Activated CD4-positive, alpha-beta T cell treated with anti-CD3 and anti-CD28 coated beads, Interleukin-2, amount 10 ng/mL, durations not matched to agents 24 days and 14 days (primary cell): ENCODE measurements at regions of chr6 and their contacts with region 1.

Region 1: GRCh38 chr6:4135665-4136353 is 434 bp upstream of the ECI2 start:
- DNase-seq: peak; percentile 97
- H3K4me3 Mint-ChIP-seq: peak overlapping the region; percentile 85
- H3K27ac Mint-ChIP-seq: peak overlapping the region; percentile 84
- H3K4me1 Mint-ChIP-seq: peaks cover 28% of the 10 kb centered on the region
- H3K27me3 Mint-ChIP-seq: no peaks in the 10 kb centered on the region

Region 2: GRCh38 chr6:3157131-3157927 is 978.5 kb before region 1 on chr6 and contains the start of gene TUBB2A:
- intact Hi-C with region 1: loop called (anchors 5 kb)
- DNase-seq: peak; percentile 97
- H3K4me3 Mint-ChIP-seq: peak within 1 kb of the TSS; percentile 86
- H3K27ac Mint-ChIP-seq: peak within 1 kb of the TSS; percentile 76
- H3K4me1 Mint-ChIP-seq: peaks cover 22% of the 10 kb centered on the region
- H3K27me3 Mint-ChIP-seq: peaks cover 40% of the 10 kb centered on the region
- total RNA-seq, gene TUBB2A: 3.9 and 4.7 TPM in 2 replicates

Region 3: GRCh38 chr6:3848925-3849605 is 286.7 kb before region 1 on chr6 and contains the start of gene FAM50B:
- intact Hi-C with region 1: loop called (anchors 5 kb)
- DNase-seq: peak; percentile 97
- H3K4me3 Mint-ChIP-seq: peak within 1 kb of the TSS; percentile 75
- H3K27ac Mint-ChIP-seq: peak within 1 kb of the TSS; percentile 81
- H3K4me1 Mint-ChIP-seq: peaks cover 23% of the 10 kb centered on the region
- H3K27me3 Mint-ChIP-seq: peaks cover 4% of the 10 kb centered on the region
- total RNA-seq, gene FAM50B: 9.8 and 10.0 TPM in 2 replicates

Region 4: DNA sequence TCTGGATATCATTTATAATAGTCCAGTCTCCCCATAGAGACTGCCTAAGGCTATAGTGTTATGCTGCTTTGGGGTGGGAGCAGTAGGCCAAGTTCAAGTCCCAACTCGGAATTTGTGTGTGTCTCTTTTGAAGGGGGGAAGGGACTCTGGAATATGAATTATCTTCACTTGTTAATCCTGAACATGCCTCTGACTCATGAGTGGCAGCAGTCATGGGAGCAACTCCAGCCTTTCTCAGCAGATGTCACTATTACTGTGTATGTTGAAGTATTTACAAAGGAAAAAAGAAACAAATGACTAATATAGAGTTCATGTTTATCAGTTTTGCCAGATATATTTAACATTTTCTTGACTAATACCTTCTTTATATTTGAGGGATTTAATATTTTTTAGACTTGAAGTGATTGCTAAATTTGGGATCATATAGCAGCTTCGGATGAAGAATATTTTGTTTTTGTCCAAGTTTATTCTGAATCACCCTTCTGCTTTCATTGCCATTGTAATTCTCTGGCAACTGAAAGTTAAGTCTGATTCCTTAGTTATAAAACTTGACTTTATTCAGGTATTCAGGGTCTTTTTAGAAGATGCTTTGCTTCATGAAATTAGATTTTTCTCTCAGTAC is 80.3 kb before region 1 on chr6:
- intact Hi-C with region 1: loop called (anchors 1 kb)
- DNase-seq: peak; percentile 71
- H3K4me3 Mint-ChIP-seq: no peak overlapping the region
- H3K27ac Mint-ChIP-seq: no peak overlapping the region
- H3K4me1 Mint-ChIP-seq: peaks cover 23% of the 10 kb centered on the region
- H3K27me3 Mint-ChIP-seq: no peaks in the 10 kb centered on the region

Region 5: GRCh38 chr6:4155848-4156466 is 20.1 kb after region 1 on chr6:
- intact Hi-C with region 1: loop called (anchors 1 kb)
- DNase-seq: peak; percentile 94
- H3K4me3 Mint-ChIP-seq: no peak overlapping the region
- H3K27ac Mint-ChIP-seq: peak overlapping the region; percentile 56
- H3K4me1 Mint-ChIP-seq: peaks cover 4% of the 10 kb centered on the region
- H3K27me3 Mint-ChIP-seq: peaks cover 7% of the 10 kb centered on the region

Region 6: DNA sequence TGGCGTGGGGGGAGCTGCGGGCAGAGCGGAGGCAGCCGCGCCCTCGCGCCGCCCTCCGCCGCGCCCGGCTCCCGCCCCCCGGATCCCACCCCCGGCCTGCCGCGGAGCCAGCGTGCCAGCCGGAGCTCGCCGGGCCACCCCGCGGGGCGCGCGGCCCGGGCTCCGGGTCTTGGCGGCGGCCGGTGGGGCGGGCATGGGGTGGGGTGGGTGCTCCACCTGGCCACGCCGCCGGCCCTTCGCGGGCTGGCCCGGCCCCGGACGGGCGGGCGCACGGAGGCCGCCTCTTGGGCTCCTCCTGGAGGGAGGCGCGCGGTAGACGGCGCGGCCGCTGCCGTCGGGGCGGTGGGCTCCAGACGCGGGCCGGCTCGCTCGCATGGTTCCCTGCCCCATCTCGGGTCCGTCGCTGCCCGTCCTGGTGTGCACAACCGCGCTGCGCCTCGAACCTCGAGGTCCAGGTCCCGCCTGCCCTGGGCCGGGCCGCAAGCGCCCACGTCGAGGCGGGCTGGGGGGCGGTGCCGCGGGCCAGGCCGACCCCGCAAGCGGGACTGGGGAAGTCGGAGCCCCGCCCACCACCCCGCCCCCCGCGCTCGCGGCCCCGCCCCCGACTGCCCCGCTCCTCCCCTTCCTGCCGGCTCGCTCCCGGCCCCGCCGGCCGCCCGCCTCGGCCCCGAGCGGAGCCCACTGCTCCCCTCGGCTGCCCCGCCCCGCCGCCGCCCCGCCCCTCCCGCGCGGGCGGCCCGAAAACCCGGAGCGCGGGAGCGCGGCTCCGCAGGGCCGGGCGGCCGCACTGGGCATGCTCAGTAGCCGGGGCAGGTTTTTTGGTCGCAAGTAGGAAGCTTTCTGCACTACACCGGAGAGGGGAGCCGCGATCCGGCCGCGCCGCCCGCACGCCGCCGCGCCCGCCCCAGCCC is 640.0 kb after region 1 on chr6 and contains the start of gene CDYL:
- intact Hi-C with region 1: loop called (anchors 10 kb)
- DNase-seq: peak; percentile 97
- H3K4me3 Mint-ChIP-seq: peak within 1 kb of the TSS; percentile 85
- H3K27ac Mint-ChIP-seq: peak within 1 kb of the TSS; percentile 87
- H3K4me1 Mint-ChIP-seq: peaks cover 37% of the 10 kb centered on the region
- H3K27me3 Mint-ChIP-seq: peaks cover 35% of the 10 kb centered on the region
- total RNA-seq, gene CDYL: 23.4 and 24.4 TPM in 2 replicates